ENCODE measurements at regions of chr17 and their contacts with region 1.

Region 1: DNA sequence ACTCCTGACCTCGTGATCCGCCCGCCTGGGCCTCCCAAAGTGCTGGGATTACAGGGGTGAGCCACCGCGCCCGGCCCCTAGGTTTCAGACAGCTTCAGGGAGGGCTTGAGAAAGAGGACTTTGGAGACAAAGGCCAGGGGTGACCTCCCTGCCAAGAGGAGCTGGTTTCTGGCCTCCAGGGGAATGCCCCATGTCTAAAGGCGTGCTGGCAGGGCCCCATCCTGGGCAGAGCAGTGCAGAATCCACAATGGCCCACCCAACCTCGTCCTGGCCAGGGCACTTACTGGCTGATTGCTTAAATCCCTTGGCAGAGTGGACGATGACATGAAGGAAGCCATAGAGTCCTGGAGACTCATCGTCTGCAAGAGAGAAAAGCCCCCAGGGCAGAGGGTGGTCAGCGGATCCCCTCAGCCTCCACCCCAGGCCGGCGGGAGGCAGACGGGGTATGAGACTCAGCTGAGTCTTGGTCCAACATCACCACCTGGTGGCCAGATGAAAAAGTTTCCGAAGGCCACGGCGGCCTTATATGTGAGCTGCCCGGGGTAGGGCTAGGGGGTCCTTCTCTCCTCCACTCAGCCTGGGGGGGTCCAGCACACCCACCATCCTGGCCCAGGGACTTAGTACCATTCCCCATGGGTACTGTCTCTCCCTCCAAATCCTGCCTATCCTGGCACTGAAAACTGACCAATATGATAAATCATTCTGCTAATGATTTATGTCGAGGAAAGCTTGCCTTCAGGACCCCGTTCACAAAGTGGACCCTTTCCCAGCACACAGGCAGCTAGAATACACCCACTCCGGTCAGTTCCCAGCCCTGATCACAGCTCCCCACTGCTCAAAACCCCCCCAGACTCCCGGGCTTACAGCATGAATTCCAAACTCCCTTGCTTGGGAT is 59.1 kb downstream of the TIMM22 start:
- DNase-seq: peak; percentile 84
- ATAC-seq: peak; percentile 82

Region 2: GRCh38 chr17:996554-997344 is 59.2 kb before region 1 on chr17 and contains the start of gene TIMM22:
- intact Hi-C with region 1: loop called (anchors 2 kb)
- DNase-seq: peak; percentile 96
- ATAC-seq: peak; percentile 96
- total RNA-seq, gene TIMM22: 17.3 TPM

Region 3: DNA sequence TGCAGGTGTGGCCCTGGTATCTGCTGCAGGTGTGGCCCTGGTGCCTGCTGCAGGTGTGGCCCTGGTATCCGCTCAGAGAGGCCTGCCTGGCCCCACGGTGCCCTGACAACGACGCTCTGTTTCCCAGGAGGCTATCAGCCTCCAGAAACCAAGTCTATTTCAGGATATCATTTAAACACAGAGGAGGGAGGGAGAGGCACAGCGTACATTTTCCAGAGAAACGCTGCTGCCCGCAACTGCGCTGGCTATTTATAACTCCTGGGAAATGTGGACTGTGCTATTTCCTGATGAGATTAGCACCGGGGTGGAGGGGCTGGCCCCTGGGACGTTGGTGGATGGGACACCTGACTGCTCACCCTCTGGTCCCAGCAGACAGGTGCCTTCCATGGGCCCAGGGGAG is 36.5 kb before region 1 on chr17:
- intact Hi-C with region 1: no loop called
- DNase-seq: no peak
- ATAC-seq: peak; percentile 84

Measured in Right ventricle myocardium inferior (tissue), 1 donor.